Left ventricle myocardium inferior (tissue), 1 donor: ENCODE measurements at regions of chr1 and their contacts with region 1.

Region 1: GRCh38 chr1:235253219-235253962 is 74.6 kb downstream of the ARID4B start:
- DNase-seq: peak; percentile 26
- H3K4me3 ChIP-seq: no peak overlapping the region
- H3K27ac ChIP-seq: no peak overlapping the region
- H3K4me1 ChIP-seq: peaks cover 5% of the 10 kb centered on the region
- H3K27me3 ChIP-seq: no peaks in the 10 kb centered on the region
- CTCF ChIP-seq: peak; percentile 91

Region 2: GRCh38 chr1:235328357-235329138 is 75.2 kb after region 1 on chr1 and contains the start of gene GGPS1:
- intact Hi-C with region 1: loop called (anchors 10 kb)
- DNase-seq: peak; percentile 98
- H3K4me3 ChIP-seq: peak within 1 kb of the TSS; percentile 96
- H3K27ac ChIP-seq: peak within 1 kb of the TSS; percentile 96
- H3K4me1 ChIP-seq: peaks cover 82% of the 10 kb centered on the region
- H3K27me3 ChIP-seq: no peaks in the 10 kb centered on the region
- CTCF ChIP-seq: peak; percentile 27
- total RNA-seq, gene GGPS1: 30.2 TPM

Region 3: DNA sequence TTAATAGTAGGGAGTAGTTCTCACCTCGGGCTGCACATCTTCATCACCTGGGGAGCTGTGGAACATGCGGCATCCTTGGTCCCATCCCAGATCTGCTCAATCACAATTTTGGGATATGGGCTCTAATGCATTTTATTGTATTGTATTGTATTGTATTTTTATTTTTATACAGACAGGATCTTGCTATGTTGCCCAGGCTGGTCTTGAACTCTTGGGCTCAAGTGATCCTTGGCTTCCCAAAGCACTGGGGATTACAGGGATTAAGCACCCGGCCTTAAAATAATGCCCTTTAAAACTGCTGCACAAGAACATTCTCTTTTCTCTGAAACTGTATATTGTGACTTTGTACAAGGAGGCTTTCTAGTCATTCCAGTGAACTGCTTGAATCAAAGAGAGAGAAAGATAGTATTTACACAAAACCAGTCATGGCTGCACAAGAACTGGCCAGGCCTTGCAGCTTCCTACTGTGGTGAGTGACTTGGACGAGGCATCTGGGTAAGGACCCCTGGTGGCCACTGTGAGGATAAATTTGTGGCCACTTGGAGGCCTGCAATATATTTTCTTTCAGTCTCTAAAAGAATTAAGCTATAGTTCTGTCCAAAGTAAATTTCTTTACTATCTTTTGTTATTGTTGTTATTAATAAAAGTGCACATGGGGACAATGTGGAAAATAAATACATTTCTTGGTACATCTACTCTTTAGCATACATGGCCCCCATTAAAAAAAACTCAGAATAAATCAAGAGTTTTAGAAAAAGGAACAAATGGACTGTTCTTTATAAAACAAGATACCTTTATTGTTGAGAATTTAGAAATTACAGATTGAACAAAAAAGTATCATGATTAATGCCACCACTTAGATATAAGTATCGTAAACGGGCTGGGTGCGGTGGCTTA is 161.9 kb after region 1 on chr1:
- intact Hi-C with region 1: loop called (anchors 2 kb)
- DNase-seq: peak; percentile 42
- H3K4me3 ChIP-seq: no peak overlapping the region
- H3K27ac ChIP-seq: no peak overlapping the region
- H3K4me1 ChIP-seq: peaks cover 7% of the 10 kb centered on the region
- H3K27me3 ChIP-seq: no peaks in the 10 kb centered on the region
- CTCF ChIP-seq: peak; percentile 83